Heart right ventricle (tissue), 16 donors: ENCODE measurements at regions of chr12 and their contacts with region 1.

Region 1: GRCh38 chr12:2583091-2583497 is 211.7 kb upstream of the FKBP4 start:
- DNase-seq: peak; percentile 58 to 82
- ATAC-seq: peak; percentile 82 to 94 (median 89)
- H3K4me3 ChIP-seq: peak overlapping the region in 4 of 10 donors; percentile 12 to 25 (median 20)
- H3K27ac ChIP-seq: peak overlapping the region in 6 of 10 donors; percentile 3 to 60 (median 46)
- H3K4me1 ChIP-seq: peaks cover 0 to 21% (median 12%) of the 10 kb centered on the region in 9 donors
- H3K27me3 ChIP-seq: no peaks in the 10 kb centered on the region
- CTCF ChIP-seq: peak; percentile 79 to 97 (median 90)

Region 2: DNA sequence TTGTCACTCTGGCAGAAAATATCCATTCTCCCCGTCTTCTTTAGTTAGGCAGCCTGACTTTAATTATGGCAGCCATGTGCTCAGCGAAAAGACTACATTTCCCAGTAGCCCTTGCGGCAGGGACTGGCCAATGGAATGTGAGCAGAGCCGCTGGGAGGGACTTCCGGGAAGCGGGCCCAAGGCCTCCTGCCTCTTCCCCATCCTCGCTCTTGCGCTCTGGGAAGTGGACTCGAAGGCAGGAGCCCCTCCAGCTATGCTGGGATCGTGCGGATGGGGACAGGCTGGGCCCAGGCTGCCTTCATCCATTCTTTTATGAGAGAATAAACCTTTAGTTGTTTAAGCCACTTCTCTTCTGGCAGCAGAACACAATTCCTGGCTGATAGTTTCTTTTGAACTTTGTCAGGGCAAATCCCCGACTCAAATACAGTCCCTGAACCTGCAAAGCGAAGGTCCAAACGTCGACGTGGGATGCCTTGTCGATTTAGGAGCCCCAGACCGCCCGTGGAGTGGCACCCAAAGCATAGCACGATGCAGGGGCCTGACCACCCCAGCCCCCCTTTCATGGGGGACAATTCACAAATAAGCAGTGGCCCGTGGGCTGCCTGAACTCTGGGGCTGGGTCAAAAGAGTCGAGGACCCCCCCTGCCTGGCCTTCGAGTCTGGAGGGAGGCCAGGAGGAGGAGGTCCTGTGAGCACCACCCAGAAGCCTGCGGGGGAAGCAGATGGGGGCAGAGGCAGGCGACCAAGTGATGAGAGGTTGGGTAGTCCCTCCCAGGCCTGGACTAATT is 778.4 kb before region 1 on chr12:
- intact Hi-C with region 1: loop called in 5 of 10 experiments (anchors 10 kb)
- DNase-seq: peak; percentile 86 to 93
- ATAC-seq: peak; percentile 51 to 92 (median 86)
- H3K4me3 ChIP-seq: no peak overlapping the region
- H3K27ac ChIP-seq: peak overlapping the region in 6 of 10 donors; percentile 19 to 77 (median 42)
- H3K4me1 ChIP-seq: peaks cover 3 to 34% (median 14%) of the 10 kb centered on the region in 9 donors
- H3K27me3 ChIP-seq: no peaks in the 10 kb centered on the region
- CTCF ChIP-seq: no peak

Region 3: GRCh38 chr12:2034633-2035430 is 548.3 kb before region 1 on chr12:
- intact Hi-C with region 1: loop called in 2 of 10 experiments (anchors 5 kb)
- DNase-seq: peak; percentile 86 to 92
- ATAC-seq: peak; percentile 85 to 93 (median 88)
- H3K4me3 ChIP-seq: peak overlapping the region in 9 of 10 donors; percentile 19 to 53 (median 39)
- H3K27ac ChIP-seq: peak overlapping the region in 3 of 10 donors; percentile 27 to 37 (median 32)
- H3K4me1 ChIP-seq: peaks cover 7 to 86% (median 58%) of the 10 kb centered on the region in 9 donors
- H3K27me3 ChIP-seq: peaks cover 0 to 48% (median 0%) of the 10 kb centered on the region in 7 donors
- CTCF ChIP-seq: peak; percentile 87 to 98 (median 95)

Region 4: GRCh38 chr12:2291182-2291832 is 291.8 kb before region 1 on chr12:
- intact Hi-C with region 1: loop called in 4 of 10 experiments (anchors 5 to 10 kb)
- DNase-seq: no peak
- ATAC-seq: no peak
- H3K4me3 ChIP-seq: no peak overlapping the region
- H3K27ac ChIP-seq: peak overlapping the region in 7 of 10 donors; percentile 2 to 54 (median 36)
- H3K4me1 ChIP-seq: peaks cover 22 to 100% (median 88%) of the 10 kb centered on the region in 9 donors
- H3K27me3 ChIP-seq: no peaks in the 10 kb centered on the region
- CTCF ChIP-seq: peak; percentile 52 to 83 (median 67)

Region 5: GRCh38 chr12:2358986-2359658 is 224.0 kb before region 1 on chr12:
- intact Hi-C with region 1: loop called in 1 of 10 experiments (anchors 2 kb)
- DNase-seq: no peak
- ATAC-seq: peak in 4 of 8 donors; percentile 23 to 64 (median 52)
- H3K4me3 ChIP-seq: no peak overlapping the region
- H3K27ac ChIP-seq: peak overlapping the region in 9 of 10 donors; percentile 22 to 79 (median 63)
- H3K4me1 ChIP-seq: peaks cover 13 to 92% (median 49%) of the 10 kb centered on the region in 9 donors
- H3K27me3 ChIP-seq: no peaks in the 10 kb centered on the region
- CTCF ChIP-seq: peak in 2 of 9 donors; percentile 9 to 18

Region 6: DNA sequence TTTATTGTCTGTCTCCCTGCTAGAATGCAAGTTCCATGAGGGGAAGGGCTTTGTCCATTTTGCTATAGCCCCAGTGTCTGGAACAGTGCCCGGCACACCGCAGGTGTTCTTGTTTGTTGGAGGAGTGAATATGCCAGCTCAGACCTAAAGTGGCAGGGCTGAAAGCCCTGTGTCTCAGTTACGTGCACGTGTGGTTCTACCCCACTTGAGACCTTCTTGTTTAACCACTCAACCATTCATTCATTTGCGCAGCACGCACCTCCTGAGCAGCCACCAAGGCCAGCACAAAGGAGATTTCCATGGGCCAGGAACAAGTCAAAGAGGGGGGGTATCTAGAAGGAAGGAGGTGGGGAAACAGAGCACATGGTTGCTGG is 126.3 kb before region 1 on chr12:
- intact Hi-C with region 1: loop called in 1 of 10 experiments (anchors 5 kb)
- DNase-seq: no peak
- ATAC-seq: no peak
- H3K4me3 ChIP-seq: no peak overlapping the region
- H3K27ac ChIP-seq: peak overlapping the region in 9 of 10 donors; percentile 63 to 88 (median 78)
- H3K4me1 ChIP-seq: peaks cover 3 to 62% (median 34%) of the 10 kb centered on the region in 9 donors
- H3K27me3 ChIP-seq: no peaks in the 10 kb centered on the region
- CTCF ChIP-seq: no peak